ENCODE measurements at regions of chr17 and their contacts with region 1.

Region 1: GRCh38 chr17:19004421-19005136 is at the start of gene FAM83G:
- DNase-seq: peak; percentile 68 to 83 (median 73)
- H3K4me3 ChIP-seq: peak within 1 kb of the TSS; percentile 52 to 73 (median 57)
- H3K4me3 Mint-ChIP-seq: peak within 1 kb of the TSS; percentile 88 to 94
- H3K27ac ChIP-seq: no peak within 1 kb of the TSS
- H3K27ac Mint-ChIP-seq: peak within 1 kb of the TSS in 6 of 7 donors; percentile 35 to 92 (median 71)
- H3K4me1 ChIP-seq: peaks cover 5 to 24% of the 10 kb centered on the region in 2 donors
- H3K4me1 Mint-ChIP-seq: peaks cover 12% of the 10 kb centered on the region
- H3K27me3 ChIP-seq: peaks cover 0 to 34% of the 10 kb centered on the region in 2 donors
- H3K27me3 Mint-ChIP-seq: peaks cover 22 to 53% (median 38%) of the 10 kb centered on the region in 3 donors
- CTCF ChIP-seq: no peak
- polyA plus RNA-seq, gene FAM83G: 0.04 to 0.17 (median 0.08) TPM

Region 2: DNA sequence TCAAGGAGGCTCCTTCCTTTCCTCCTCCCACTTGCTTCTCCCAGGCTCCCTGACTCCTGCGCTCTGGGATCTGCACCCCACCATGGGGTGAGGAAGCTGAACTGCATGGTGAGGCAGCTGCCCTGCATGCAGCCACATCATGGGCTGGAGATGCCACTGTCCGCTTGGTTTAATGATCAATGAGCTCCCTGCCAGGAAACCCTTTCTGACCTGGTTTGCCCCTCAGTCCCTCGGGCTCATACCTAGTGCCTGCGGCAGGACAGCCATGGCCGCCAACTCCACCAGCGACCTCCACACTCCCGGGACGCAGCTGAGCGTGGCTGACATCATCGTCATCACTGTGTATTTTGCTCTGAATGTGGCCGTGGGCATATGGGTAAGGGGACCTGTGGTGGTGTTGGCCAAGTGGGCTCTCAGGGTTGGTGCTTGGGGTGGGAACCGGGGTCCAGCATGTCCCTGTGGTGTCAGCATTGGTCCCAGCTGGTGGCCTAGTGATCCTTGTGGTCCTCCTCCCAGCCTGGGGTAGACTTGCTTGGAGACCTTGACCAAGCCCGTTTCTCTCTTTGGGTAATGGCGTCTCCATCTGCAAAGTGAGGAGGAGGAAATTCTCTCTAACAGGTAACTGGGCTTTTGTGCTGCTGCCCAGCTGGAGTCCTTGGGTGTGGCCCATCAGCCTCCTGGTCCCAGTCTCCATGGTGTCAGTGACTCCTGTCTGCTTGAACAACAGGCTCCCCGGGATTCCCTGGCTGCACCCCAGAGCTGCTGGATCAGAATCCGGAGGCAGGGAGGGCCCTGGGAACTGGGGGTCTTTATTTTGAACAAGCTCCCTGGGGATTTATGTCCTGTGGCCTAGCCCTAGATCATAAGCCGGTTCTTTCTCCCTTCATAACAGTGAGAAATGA is 52.4 kb before region 1 on chr17 and contains the start of gene SLC5A10:
- intact Hi-C with region 1: loop called in 1 of 2 experiments (anchors 10 kb)
- DNase-seq: no peak
- H3K4me3 ChIP-seq: no peak within 1 kb of the TSS
- H3K4me3 Mint-ChIP-seq: no peak within 1 kb of the TSS
- H3K27ac ChIP-seq: no peak within 1 kb of the TSS
- H3K27ac Mint-ChIP-seq: no peak within 1 kb of the TSS
- H3K4me1 ChIP-seq: no peaks in the 10 kb centered on the region
- H3K4me1 Mint-ChIP-seq: peaks cover 3% of the 10 kb centered on the region
- H3K27me3 ChIP-seq: no peaks in the 10 kb centered on the region
- H3K27me3 Mint-ChIP-seq: peaks cover 3 to 5% (median 3%) of the 10 kb centered on the region in 3 donors
- CTCF ChIP-seq: no peak
- polyA plus RNA-seq, gene SLC5A10: 0.10 to 0.17 (median 0.12) TPM

Region 3: GRCh38 chr17:18981642-18982424 is 22.7 kb before region 1 on chr17:
- intact Hi-C with region 1: no loop called
- DNase-seq: peak in 2 of 3 donors; percentile 3 to 28
- H3K4me3 ChIP-seq: no peak overlapping the region
- H3K4me3 Mint-ChIP-seq: no peak overlapping the region
- H3K27ac ChIP-seq: no peak overlapping the region
- H3K27ac Mint-ChIP-seq: peak overlapping the region in 1 of 7 donors; percentile 54
- H3K4me1 ChIP-seq: no peaks in the 10 kb centered on the region
- H3K4me1 Mint-ChIP-seq: peaks cover 4% of the 10 kb centered on the region
- H3K27me3 ChIP-seq: no peaks in the 10 kb centered on the region
- H3K27me3 Mint-ChIP-seq: peaks cover 1 to 6% (median 2%) of the 10 kb centered on the region in 3 donors
- CTCF ChIP-seq: no peak

Measured in CD14-positive monocyte (primary cell).